ENCODE measurements at regions of chr14 and their contacts with region 1.

Region 1: DNA sequence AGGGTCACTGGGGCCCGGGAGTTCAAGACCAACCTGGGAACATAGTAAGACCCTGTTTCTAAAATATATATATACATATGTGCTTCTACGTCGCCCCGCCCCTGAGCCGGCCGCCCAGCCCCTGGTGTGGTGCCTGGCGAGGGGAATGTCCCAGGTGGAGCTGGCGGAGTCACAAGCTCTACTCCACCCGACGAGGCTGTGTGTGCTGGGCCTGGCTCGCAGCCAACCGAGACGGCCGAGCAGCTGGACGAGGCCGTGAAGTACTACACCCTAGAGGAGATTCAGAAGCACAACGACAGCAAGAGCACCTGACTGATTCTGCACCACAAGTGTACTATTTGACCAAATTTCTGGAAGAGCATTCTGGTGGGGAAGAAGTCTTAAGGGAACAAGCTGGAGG is 22.1 kb upstream of the ITPK1 start:
- DNase-seq: peak; percentile 29
- H3K4me3 ChIP-seq: no peak overlapping the region
- H3K27ac ChIP-seq: no peak overlapping the region
- H3K4me1 ChIP-seq: no peaks in the 10 kb centered on the region
- H3K27me3 ChIP-seq: no peaks in the 10 kb centered on the region
- CTCF ChIP-seq: no peak
- POLR2A ChIP-seq: no peak

Region 2: DNA sequence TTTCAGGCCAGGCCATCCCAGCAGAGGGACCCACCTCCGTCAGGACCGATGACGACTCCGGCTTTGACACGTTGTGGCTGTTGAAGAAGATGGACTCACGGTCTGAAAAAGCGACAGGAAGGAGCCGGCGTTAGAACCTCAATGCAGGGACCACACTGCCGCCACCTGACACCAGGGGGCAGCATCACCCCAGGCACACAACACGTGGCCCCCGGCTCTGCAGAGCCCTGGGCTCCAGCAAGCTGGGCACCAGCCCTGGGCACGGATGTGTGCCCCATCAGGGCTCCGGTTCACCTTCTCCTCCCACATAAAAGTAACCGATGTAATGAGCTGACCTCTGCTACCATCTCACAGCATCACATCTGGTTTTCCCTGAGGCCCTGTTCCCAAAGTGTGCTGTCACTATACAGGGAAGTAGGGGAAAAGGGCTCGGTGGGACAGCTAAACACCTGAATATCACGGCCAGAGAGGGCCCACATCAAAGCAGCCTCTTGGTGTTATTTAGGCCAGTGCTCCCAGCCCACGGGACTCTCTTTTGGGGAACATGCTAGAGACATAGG is 185.9 kb before region 1 on chr14:
- intact Hi-C with region 1: loop called (anchors 5 kb)
- DNase-seq: peak; percentile 75 to 78
- H3K4me3 ChIP-seq: no peak overlapping the region
- H3K27ac ChIP-seq: no peak overlapping the region
- H3K4me1 ChIP-seq: no peaks in the 10 kb centered on the region
- H3K27me3 ChIP-seq: no peaks in the 10 kb centered on the region
- CTCF ChIP-seq: peak; percentile 95 to 96 (median 95)
- POLR2A ChIP-seq: peak in 1 of 2 donors; percentile 23

Measured in uterus (tissue), 4 donors.